ENCODE measurements at regions of chr7 and their contacts with region 1.

Region 1: GRCh38 chr7:98841179-98841997 is 28.4 kb downstream of the TMEM130 start:
- DNase-seq: peak; percentile 9 to 78
- H3K4me3 ChIP-seq: no peak overlapping the region
- H3K4me1 ChIP-seq: no peaks in the 10 kb centered on the region
- H3K27me3 ChIP-seq: no peaks in the 10 kb centered on the region

Region 2: DNA sequence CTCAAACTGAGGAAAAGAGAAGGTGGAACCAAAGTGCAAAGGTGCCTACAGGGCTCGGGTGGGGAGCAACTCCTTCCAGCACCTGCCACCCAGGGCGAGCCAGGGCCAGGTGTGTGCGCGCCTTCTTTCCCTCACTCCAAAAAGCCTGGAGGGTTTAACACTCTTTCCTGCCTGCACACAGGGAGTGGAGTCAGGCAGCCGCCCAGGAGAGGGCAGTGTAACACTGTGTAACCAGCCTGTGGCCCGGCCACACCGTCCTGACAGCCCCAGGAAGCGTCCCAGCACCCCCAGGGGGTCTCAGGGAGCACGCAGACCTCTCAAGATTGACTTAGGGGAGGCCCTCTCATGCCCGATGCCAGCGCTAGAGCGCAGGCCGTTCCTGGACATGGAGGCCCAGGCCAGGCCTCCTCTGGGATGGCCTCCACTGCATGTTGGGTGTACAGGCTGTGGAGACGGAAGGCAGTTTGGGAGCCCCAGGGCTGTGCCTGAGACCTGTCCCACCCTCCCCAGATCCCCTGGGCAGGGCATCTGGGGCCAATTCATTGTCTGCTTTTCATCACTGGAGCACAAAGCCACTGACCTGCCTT is 546.5 kb before region 1 on chr7:
- in situ Hi-C with region 1: loop called (anchors 10 kb)
- DNase-seq: peak; percentile 33 to 74
- H3K4me3 ChIP-seq: no peak overlapping the region
- H3K4me1 ChIP-seq: peaks cover 13% of the 10 kb centered on the region
- H3K27me3 ChIP-seq: no peaks in the 10 kb centered on the region

Region 3: DNA sequence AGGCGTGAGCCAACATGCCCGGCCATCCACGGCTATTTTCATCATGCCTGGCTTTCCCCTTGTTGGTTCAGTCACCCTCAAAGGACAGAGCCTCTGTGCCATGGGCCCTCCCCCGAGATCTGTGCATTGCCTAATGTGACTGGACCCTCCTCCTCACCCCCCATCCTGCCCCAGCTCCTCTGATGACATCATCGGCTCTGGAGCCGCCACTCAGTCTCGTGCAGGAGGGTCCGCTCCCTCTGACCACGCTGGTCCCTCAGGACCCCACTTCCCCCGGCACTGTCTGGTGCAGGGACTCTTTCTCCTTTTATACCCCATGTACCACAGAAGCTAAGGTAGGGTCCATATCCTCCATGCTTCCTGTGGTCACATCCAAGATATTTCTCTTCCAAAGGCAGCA is 407.3 kb before region 1 on chr7:
- in situ Hi-C with region 1: loop called (anchors 5 kb)
- DNase-seq: no peak
- H3K4me3 ChIP-seq: no peak overlapping the region
- H3K4me1 ChIP-seq: no peaks in the 10 kb centered on the region
- H3K27me3 ChIP-seq: no peaks in the 10 kb centered on the region

Measured in HAP-1 (cell line).